ENCODE measurements at regions of chr5 and their contacts with region 1.

Region 1: DNA sequence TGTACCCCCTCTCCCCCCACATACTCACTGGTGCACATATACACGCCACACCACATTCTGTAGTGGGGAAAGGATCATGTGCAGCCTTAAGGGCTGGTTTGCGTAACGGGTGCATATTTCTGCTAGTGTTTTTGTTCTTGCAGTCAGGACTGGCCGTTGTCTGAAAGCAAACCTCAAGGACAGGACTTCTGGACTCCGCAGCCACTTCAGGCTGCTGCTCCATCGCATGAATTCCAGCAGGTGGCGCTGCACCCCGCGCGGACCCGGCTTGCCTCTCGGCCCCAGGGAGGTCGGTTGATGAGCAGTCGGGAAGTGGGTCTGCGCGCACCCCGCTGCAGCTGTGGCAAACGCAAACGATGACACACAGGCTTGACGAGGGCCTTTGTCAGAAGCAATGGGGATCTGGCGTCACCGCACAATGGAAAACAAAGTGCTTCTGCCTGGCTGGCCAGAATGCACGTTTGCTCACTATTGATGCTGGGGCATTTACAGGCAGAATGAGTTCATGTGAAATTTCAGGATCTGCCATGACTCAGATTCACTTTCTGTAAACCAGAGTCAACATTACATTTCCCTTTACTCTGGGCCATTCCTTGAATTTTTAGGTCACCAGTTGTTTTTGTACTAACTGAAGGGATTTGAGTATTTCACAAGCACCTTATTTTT is 36.3 kb upstream of the GLRX start:
- DNase-seq: peak; percentile 91 to 99
- H3K4me3 ChIP-seq: peak overlapping the region; percentile 32 to 55
- H3K27ac ChIP-seq: peak overlapping the region; percentile 93 to 96
- H3K4me1 ChIP-seq: peaks cover 28 to 53% of the 10 kb centered on the region in 2 donors
- H3K27me3 ChIP-seq: no peaks in the 10 kb centered on the region
- CTCF ChIP-seq: peak; percentile 98 to 99 (median 99)

Region 2: DNA sequence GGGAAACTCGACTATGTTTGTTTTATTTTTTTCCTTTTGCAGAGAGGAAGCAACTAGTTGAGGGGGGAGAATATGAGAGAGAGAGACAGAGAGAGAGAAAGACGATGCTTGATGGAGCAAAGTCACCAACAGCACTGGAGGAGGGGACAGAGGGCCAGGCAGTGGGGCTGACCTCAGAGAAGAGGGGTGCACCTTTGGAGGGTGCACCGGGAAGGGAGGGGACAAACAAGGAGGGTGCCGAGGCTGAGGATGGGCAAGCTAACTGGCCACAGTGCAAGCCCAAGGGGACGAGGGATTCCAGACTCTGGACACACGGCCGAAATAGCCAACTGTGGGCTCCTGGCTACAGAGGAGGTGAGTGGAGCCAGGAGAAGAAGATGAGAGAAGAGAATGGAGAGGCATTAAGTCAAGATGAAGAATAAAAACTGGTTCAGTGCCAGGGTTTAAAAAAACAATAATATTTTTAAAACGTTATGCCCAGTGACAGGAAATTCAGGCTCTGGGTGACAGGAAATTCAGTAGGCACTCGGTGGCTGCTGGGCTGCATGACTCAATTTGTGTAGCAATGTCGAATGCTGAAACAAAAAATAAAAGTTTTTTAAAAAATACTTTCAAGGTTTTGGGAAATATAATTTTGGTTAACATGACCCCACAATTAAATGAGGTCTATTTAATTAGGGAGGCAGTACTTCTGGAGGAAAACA is 23.0 kb before region 1 on chr5:
- intact Hi-C with region 1: loop called (anchors 2 kb)
- DNase-seq: peak in 1 of 2 donors; percentile 82
- H3K4me3 ChIP-seq: peak overlapping the region; percentile 75 to 89
- H3K27ac ChIP-seq: peak overlapping the region; percentile 89 to 90
- H3K4me1 ChIP-seq: peaks cover 3 to 19% of the 10 kb centered on the region in 2 donors
- H3K27me3 ChIP-seq: no peaks in the 10 kb centered on the region
- CTCF ChIP-seq: no peak

Region 3: DNA sequence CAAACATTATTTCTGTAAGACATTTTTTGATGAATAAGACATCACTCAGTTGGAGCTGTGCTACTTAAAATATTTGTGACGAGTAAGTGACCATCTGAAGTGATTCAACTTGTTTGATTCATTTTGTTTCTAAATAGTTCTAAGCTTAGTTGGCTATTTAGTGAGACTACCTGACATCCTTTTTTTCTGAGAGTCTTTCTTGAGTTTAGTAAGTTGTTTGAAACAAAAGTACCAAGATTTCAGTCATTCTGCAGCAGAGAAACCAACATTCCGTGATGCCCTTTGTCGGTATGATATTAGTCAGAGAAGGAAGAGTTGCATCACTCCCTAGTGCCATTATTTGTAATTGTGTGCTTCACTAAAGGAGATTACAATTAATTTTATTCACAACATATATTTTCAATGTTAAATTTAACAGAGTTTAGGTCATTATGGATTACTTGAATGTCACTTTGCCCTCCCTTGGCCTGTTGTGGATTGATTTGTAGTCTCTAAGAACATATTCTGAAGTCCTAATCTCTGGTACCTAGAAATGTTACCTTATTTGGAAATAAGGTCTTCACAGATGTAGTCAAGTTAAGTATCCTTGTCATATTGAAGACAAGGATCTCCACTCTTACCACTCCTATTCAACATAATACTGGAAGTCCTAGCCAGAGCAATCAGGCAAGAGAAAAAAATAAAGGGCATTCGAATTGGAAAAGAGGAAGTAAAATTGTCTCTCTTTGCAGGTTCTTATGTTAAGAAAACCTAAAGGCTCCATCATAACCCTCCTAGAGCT is 362.0 kb after region 1 on chr5:
- intact Hi-C with region 1: loop called (anchors 5 kb)
- DNase-seq: no peak
- H3K4me3 ChIP-seq: no peak overlapping the region
- H3K27ac ChIP-seq: peak overlapping the region; percentile 52 to 70
- H3K4me1 ChIP-seq: peaks cover 0 to 13% of the 10 kb centered on the region in 2 donors
- H3K27me3 ChIP-seq: no peaks in the 10 kb centered on the region
- CTCF ChIP-seq: no peak

Region 4: DNA sequence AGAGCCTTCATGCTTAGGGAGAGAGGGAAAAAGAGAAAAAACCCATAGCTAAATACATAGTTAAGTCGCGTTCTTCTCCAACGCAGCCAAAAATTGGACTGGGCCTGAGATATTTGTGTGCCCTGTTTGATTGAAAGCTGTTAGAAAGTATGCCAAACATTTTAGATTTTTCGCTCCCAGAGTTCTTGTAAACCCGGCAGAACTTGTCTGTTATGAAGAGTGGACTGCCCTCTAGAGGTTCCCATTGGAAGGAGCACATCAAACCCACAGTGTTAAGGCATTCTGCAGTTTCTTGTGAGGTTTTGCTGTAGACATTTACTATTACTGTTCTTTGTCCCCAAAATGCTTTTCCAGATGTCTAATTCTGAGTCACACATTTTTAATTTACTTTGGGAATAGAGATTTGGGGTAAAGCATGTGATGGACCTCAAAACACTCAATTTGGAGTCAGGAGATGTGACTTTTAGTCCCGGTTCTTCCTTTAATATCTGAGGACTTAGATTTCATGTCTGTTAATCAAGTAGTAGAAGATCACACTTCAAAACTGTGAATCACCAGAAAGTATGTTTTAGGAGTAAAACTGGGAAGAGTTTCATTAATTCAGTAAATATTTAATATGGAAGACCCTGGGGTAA is 477.7 kb after region 1 on chr5:
- intact Hi-C with region 1: loop called (anchors 1 kb)
- DNase-seq: peak in 1 of 2 donors; percentile 91
- H3K4me3 ChIP-seq: no peak overlapping the region
- H3K27ac ChIP-seq: peak overlapping the region; percentile 80 to 81
- H3K4me1 ChIP-seq: peaks cover 11 to 67% of the 10 kb centered on the region in 2 donors
- H3K27me3 ChIP-seq: no peaks in the 10 kb centered on the region
- CTCF ChIP-seq: peak; percentile 84 to 86 (median 84)

Region 5: DNA sequence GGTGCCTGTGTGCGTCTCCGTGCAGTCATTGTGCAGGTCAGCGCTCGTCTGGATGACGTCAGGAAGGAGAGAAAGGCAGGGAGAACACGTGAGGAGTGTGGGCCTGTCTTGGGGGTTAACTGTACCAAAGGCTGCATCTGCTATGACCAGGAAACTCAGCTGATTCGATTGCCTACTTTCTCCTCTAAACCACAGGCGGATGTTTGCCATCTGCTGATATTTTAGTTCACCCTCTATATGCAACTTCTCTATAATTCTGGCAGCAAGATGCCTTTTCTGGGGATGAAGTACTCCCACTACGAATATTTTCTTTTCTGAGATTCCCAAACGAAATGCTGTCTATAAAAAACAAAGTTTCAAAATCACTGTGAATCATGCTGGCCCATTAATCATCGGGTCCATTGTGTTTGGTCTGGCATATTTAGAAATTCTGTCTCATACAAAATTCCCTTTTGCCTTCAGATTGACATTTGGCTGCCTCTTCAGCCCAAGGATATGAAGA is 549.5 kb after region 1 on chr5:
- intact Hi-C with region 1: loop called (anchors 10 kb)
- DNase-seq: no peak
- H3K4me3 ChIP-seq: no peak overlapping the region
- H3K27ac ChIP-seq: peak overlapping the region in 1 of 2 donors; percentile 32
- H3K4me1 ChIP-seq: no peaks in the 10 kb centered on the region
- H3K27me3 ChIP-seq: no peaks in the 10 kb centered on the region
- CTCF ChIP-seq: no peak

Region 6: DNA sequence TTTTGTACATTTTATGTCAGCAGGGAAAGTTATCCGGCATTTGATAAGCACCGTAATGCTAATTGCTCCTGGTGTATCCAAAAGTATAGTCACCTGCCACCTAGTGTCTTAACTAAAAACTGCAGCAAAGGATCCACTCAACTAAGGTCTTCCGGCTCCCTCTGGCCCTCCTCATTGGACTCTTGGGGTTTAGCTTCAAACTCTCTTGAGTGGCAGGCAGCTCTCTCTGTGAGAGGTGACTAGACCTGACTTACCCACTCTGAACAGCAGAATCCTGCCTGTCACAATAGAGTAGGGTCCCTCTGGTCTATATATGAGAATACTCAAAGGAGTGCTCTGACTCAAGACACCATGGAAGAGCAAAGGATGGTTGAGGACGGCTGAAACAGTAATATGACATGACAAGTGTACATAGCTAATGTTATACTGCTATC is 743.0 kb after region 1 on chr5:
- intact Hi-C with region 1: loop called (anchors 5 kb)
- DNase-seq: no peak
- H3K4me3 ChIP-seq: peak overlapping the region in 1 of 2 donors; percentile 29
- H3K27ac ChIP-seq: no peak overlapping the region
- H3K4me1 ChIP-seq: no peaks in the 10 kb centered on the region
- H3K27me3 ChIP-seq: no peaks in the 10 kb centered on the region
- CTCF ChIP-seq: peak; percentile 75 to 86 (median 85)

Region 7: DNA sequence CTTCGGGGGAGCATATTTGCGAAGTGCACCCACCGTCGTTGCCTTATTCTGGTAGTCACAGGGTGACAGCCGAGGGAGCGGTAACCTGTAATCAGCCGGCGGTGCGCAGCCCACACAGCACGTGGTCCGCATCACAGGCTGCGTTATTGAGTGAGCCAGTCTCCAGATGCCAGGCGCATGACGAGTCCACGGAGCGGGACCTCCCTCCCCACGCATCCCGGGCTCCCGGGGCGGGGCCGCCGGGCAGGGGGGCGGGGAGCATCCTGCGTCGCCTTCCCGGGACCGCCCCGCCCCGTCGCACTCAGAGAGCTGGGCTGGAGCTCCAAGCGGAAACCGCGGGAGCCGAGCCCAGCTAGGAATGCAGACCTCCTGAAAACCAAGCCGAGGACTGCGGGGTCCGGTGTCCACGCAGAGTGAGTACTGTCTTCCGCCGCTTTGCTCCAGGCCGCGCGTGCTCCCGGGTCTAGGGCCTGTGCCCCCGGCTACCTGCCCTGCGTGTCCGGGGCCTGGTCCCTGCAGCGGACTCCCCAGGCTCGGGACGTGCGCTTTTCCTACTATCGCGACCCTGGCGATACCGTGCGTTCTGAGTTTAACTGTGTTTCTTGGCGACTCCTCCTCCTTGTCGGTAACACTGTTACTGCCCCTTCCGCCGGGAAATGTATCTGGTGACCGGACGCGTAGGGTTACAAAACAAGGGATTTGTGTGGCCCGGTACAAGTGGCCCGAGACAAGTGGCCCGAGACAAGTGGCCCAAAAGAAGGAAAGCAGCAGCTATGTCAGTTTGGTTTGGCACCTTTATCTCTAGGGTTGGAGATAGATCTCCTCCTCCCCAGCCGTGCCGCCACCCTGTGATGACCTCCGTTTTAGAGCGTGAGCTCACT is 843.9 kb after region 1 on chr5:
- intact Hi-C with region 1: loop called (anchors 5 kb)
- DNase-seq: peak; percentile 90 to 99
- H3K4me3 ChIP-seq: peak overlapping the region; percentile 63 to 75
- H3K27ac ChIP-seq: peak overlapping the region; percentile 90 to 94
- H3K4me1 ChIP-seq: peaks cover 0 to 21% of the 10 kb centered on the region in 2 donors
- H3K27me3 ChIP-seq: no peaks in the 10 kb centered on the region
- CTCF ChIP-seq: no peak

Measured in ascending aorta (tissue), 2 donors.